ENCODE measurements at regions of chr2 and their contacts with region 1.

Region 1: GRCh38 chr2:235595422-235596010 is 101.7 kb downstream of the AGAP1 start:
- DNase-seq: peak; percentile 87
- ATAC-seq: peak; percentile 59

Region 2: GRCh38 chr2:235669983-235670962 is 74.8 kb after region 1 on chr2:
- intact Hi-C with region 1: loop called (anchors 5 kb)
- DNase-seq: peak; percentile 80
- ATAC-seq: peak; percentile 78

Region 3: DNA sequence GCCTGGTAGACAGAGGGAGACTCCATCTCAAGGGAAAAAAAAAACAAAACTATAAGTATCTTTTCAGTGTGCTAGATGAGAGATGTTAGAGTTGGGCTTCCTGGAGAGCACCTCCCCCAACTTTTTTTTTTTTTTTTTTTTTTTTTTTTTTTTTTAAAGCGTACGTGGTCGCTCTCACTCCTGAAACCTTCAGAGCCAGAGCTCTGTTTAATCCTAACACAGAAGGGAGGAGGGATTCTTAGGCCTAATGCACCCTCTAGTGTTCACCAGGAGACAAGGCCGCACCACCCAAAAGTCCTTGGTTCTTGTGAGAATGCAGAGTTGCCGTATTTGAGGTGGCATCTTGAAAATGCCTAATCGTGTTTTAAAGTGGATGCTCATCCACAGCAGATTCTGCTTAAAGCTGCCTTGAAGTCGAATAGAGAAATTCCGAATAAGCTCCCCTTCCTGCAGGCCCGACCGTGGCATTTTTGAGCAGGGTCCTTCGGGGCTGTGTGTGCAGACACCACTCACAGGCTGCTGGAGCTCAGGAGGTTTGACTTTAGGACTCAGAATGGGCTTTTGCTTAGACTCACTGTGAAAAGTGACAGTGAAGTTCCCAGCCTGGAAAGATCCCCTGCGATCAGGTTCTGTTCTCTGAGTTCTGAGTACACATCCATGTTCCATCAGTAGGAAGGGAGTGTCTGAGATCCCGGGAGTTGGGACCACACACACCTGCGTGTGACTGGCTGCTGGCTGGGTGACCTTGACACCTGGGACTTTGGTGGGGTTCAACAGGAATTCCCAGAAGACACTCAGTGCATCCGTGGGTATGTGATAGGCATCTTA is 151.0 kb after region 1 on chr2:
- intact Hi-C with region 1: loop called (anchors 2 kb)
- DNase-seq: no peak
- ATAC-seq: peak; percentile 92

Region 4: DNA sequence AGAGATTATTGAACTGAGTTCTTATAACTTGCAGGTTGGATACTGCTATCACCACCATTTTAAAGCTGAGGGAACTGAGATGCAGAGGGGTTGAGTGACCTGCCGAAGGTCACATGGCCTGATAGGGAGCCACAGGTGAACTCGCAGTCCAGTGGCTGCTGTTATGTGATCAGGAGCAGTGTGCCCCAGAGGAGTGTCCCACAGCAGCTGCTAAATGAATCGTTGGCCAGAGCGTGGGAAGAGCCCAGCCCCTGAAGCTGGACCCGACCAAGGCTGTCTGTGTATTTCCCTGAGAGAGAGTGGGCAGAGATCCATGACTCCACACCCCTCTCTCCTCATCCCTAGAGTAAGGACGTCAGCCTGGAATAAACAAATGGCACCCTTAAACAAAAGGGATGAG is 1944.2 kb after region 1 on chr2:
- intact Hi-C with region 1: loop called (anchors 5 kb)
- DNase-seq: no peak
- ATAC-seq: peak; percentile 33